ENCODE measurements at regions of chr2 and their contacts with region 1.

Region 1: GRCh38 chr2:142596334-142597088 is 281.0 kb upstream of the KYNU start:
- DNase-seq: peak; percentile 25 to 89
- H3K4me3 ChIP-seq: no peak overlapping the region
- H3K27ac ChIP-seq: peak overlapping the region; percentile 40
- H3K4me1 ChIP-seq: peaks cover 35% of the 10 kb centered on the region
- H3K27me3 ChIP-seq: no peaks in the 10 kb centered on the region
- CTCF ChIP-seq: no peak

Region 2: GRCh38 chr2:142008135-142008744 is 588.3 kb before region 1 on chr2:
- CTCF ChIA-PET with region 1: interaction called, 10 read pairs
- POLR2A ChIA-PET with region 1: no interaction called
- intact Hi-C with region 1: no loop called
- DNase-seq: no peak
- H3K4me3 ChIP-seq: no peak overlapping the region
- H3K27ac ChIP-seq: no peak overlapping the region
- H3K4me1 ChIP-seq: no peaks in the 10 kb centered on the region
- H3K27me3 ChIP-seq: no peaks in the 10 kb centered on the region
- CTCF ChIP-seq: no peak

Region 3: DNA sequence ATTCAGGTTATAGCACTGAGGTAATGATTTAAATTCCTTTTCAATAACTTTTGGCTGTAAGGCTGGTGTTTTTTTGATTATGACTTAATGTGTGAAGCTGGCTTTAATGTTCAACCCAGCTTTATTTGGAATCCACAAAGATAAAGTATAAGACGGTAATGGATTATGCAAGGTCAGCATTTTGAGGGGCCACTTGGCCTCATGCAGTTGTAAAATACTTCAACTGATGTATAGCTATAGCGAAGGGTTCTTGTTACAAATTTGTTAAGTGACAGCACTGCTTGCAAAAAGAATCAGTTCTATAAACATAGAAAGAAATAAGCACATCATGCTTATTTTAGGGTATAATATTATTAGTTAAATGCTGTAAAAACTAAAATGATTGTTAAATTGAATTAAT is 502.3 kb before region 1 on chr2:
- CTCF ChIA-PET with region 1: no interaction called
- POLR2A ChIA-PET with region 1: interaction called, 10 read pairs
- intact Hi-C with region 1: no loop called
- DNase-seq: no peak
- H3K4me3 ChIP-seq: no peak overlapping the region
- H3K27ac ChIP-seq: no peak overlapping the region
- H3K4me1 ChIP-seq: no peaks in the 10 kb centered on the region
- H3K27me3 ChIP-seq: no peaks in the 10 kb centered on the region
- CTCF ChIP-seq: no peak

Region 4: DNA sequence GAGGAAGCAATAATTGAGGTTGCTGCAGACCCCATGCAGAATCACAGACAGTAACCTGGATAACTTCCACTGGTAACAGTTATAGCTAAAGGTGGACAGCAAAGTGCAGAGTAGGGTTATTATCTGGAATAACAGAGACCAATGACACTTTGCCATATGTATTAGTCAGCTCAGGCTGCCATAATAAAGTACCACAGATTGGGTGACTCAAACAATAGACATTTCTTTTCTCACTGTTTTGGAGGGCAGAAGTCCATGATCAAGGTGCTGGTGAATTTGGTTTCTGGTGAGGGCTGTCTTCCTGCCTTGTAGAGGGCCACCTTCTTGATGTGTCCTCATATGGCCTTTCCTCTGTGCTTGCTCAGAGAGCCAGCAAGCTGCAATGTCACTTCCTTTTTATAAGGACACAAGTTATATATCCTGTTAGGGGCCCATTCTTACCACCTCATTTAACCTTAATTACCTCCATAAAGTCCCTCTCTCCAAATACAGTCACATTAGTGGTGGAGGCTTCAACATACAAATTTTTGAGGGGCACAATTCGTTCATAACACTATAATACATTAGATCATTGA is 274.7 kb before region 1 on chr2:
- CTCF ChIA-PET with region 1: no interaction called
- POLR2A ChIA-PET with region 1: no interaction called
- intact Hi-C with region 1: loop called (anchors 2 kb)
- DNase-seq: no peak
- H3K4me3 ChIP-seq: no peak overlapping the region
- H3K27ac ChIP-seq: no peak overlapping the region
- H3K4me1 ChIP-seq: peaks cover 18% of the 10 kb centered on the region
- H3K27me3 ChIP-seq: no peaks in the 10 kb centered on the region
- CTCF ChIP-seq: no peak

Region 5: GRCh38 chr2:142415461-142415860 is 181.1 kb before region 1 on chr2:
- CTCF ChIA-PET with region 1: no interaction called
- POLR2A ChIA-PET with region 1: no interaction called
- intact Hi-C with region 1: loop called (anchors 10 kb)
- DNase-seq: no peak
- H3K4me3 ChIP-seq: no peak overlapping the region
- H3K27ac ChIP-seq: no peak overlapping the region
- H3K4me1 ChIP-seq: no peaks in the 10 kb centered on the region
- H3K27me3 ChIP-seq: no peaks in the 10 kb centered on the region
- CTCF ChIP-seq: no peak